Heart left ventricle (tissue), 16 donors: ENCODE measurements at regions of chr2 and their contacts with region 1.

Region 1: GRCh38 chr2:159712143-159712928 is at the start of gene MARCHF7:
- DNase-seq: peak; percentile 97 to 99 (median 97)
- ATAC-seq: peak; percentile 98 to 99 (median 98)
- H3K4me3 ChIP-seq: peak within 1 kb of the TSS; percentile 70 to 100 (median 86)
- H3K27ac ChIP-seq: peak within 1 kb of the TSS; percentile 91 to 100 (median 98)
- H3K4me1 ChIP-seq: peaks cover 8 to 54% (median 40%) of the 10 kb centered on the region in 12 donors
- H3K27me3 ChIP-seq: no peaks in the 10 kb centered on the region
- CTCF ChIP-seq: peak; percentile 28 to 78 (median 52)
- POLR2A ChIP-seq: peak in 1 of 2 donors; percentile 88
- total RNA-seq, gene MARCHF7: 69.8 to 97.9 (median 84.4) TPM

Region 2: DNA sequence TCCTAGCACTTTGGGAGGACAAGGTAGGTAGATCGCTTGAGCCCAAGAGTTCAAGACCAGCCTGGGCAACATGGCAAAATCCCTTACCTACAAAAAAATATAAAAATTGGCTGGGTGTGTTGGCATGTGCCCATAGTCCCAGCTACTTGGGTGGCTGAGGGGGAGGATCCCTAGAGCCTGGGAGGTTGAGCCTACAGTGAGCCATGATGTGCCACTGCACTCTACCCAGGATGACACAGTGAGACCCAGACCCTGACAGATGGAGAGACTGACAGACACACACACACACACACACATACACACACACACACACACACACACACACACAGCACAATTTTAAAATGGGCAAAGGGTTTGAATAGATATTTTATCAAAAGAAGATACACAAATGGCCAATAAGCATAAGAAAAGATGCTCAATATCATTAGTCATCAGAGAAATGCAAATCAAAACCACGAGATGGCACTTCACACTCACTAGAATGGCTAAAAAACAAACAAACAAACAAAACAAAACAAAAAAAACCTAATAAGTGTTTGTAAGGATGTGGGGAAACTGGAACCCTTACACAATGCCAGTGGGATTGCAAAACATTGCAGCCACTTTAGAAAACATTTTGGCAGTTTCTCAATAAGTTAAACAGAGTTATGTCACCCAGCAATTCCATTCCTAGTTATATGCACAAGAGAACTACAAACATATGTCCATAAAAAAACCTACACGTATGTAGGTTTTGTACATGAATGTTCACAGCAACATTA is 138.3 kb before region 1 on chr2:
- intact Hi-C with region 1: no loop called
- DNase-seq: no peak
- ATAC-seq: no peak
- H3K4me3 ChIP-seq: no peak overlapping the region
- H3K27ac ChIP-seq: no peak overlapping the region
- H3K4me1 ChIP-seq: peaks cover 0 to 17% (median 0%) of the 10 kb centered on the region in 12 donors
- H3K27me3 ChIP-seq: no peaks in the 10 kb centered on the region
- CTCF ChIP-seq: no peak
- POLR2A ChIP-seq: no peak

Region 3: GRCh38 chr2:159615140-159615951 is 97.0 kb before region 1 on chr2:
- intact Hi-C with region 1: loop called in 8 of 10 experiments (anchors 1 to 10 kb)
- DNase-seq: peak; percentile 93 to 94 (median 94)
- ATAC-seq: peak; percentile 89 to 98 (median 97)
- H3K4me3 ChIP-seq: peak overlapping the region; percentile 61 to 94 (median 74)
- H3K27ac ChIP-seq: peak overlapping the region; percentile 94 to 99 (median 98)
- H3K4me1 ChIP-seq: peaks cover 3 to 52% (median 32%) of the 10 kb centered on the region in 12 donors
- H3K27me3 ChIP-seq: no peaks in the 10 kb centered on the region
- CTCF ChIP-seq: no peak
- POLR2A ChIP-seq: peak in 1 of 2 donors; percentile 62

Region 4: GRCh38 chr2:159748089-159748488 is 35.8 kb after region 1 on chr2:
- intact Hi-C with region 1: loop called in 3 of 10 experiments (anchors 5 kb)
- DNase-seq: no peak
- ATAC-seq: no peak
- H3K4me3 ChIP-seq: no peak overlapping the region
- H3K27ac ChIP-seq: no peak overlapping the region
- H3K4me1 ChIP-seq: peaks cover 0 to 35% (median 11%) of the 10 kb centered on the region in 12 donors
- H3K27me3 ChIP-seq: no peaks in the 10 kb centered on the region
- CTCF ChIP-seq: no peak
- POLR2A ChIP-seq: no peak

Region 5: DNA sequence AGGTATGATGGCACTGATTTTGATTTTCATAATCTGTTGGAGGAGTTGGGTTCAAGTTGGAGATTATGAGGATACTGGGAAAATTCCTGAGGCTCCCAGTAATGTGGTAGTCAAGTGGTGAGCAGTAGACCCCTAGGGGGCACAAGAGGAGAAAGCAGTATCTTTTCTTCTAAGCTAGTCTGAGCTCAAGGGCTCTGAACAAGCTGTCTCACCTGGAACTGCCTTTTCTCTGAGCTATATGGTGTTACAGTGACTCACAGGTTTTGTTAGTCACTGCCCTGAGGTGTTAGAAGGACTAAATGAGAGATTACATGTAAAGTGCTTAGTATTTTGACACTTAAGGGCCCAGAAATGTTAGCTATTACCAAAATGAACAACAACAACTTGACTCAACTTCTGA is 43.5 kb after region 1 on chr2:
- intact Hi-C with region 1: loop called in 3 of 10 experiments (anchors 5 kb)
- DNase-seq: no peak
- ATAC-seq: peak in 3 of 4 donors; percentile 46 to 56 (median 51)
- H3K4me3 ChIP-seq: no peak overlapping the region
- H3K27ac ChIP-seq: peak overlapping the region in 2 of 12 donors; percentile 47 to 50
- H3K4me1 ChIP-seq: peaks cover 0 to 61% (median 29%) of the 10 kb centered on the region in 12 donors
- H3K27me3 ChIP-seq: no peaks in the 10 kb centered on the region
- CTCF ChIP-seq: peak in 3 of 12 donors; percentile 16 to 29 (median 20)
- POLR2A ChIP-seq: no peak

Region 6: GRCh38 chr2:159797543-159798375 is 85.4 kb after region 1 on chr2 and contains the start of gene CD302:
- intact Hi-C with region 1: loop called in 2 of 10 experiments (anchors 5 to 10 kb)
- DNase-seq: peak; percentile 82 to 90 (median 86)
- ATAC-seq: peak; percentile 49 to 92 (median 86)
- H3K4me3 ChIP-seq: peak within 1 kb of the TSS; percentile 62 to 96 (median 80)
- H3K27ac ChIP-seq: peak within 1 kb of the TSS; percentile 58 to 94 (median 77)
- H3K4me1 ChIP-seq: peaks cover 0 to 61% (median 13%) of the 10 kb centered on the region in 12 donors
- H3K27me3 ChIP-seq: no peaks in the 10 kb centered on the region
- CTCF ChIP-seq: no peak
- POLR2A ChIP-seq: peak in 1 of 2 donors; percentile 57
- total RNA-seq, gene CD302: 9.0 to 24.9 (median 13.7) TPM

Region 7: DNA sequence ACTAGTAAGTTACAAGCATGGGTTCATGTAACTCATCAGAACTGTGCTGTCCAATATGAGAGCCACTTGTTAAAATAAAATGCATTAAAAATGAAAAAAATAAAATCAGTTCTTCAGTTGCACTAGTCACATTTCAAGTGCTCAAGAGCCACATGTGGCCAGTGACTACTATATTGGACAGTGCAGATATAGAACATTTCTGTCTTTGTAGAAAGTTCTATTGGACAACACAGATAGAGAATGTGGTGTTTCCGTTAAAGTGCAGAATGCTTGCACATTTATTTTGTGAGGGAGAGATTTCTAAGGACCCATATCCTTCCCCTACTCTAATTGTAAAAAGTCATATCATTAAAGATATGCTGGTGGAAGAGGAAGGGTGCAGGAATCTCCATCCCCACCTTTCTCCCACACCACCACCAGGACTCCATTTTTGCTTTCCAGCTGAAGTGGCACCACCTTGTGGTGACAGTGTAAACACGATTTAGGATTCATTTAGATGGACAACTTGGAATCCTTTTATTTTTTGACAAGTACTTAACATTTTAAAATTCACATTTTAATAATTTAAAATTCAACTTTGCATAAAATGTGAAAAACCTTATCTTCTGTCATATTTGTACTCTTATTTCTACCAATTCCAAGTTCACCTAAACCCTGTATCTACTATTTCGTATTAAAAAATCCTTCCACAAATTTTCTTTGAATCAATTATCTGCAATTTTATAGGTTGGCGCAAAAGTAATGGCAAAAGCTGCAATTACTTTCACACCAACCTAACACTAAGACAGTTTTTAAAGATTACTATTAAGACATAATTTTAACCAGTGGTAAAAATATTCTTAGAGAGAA is 95.1 kb after region 1 on chr2:
- intact Hi-C with region 1: loop called in 1 of 10 experiments (anchors 10 kb)
- DNase-seq: peak in 2 of 5 donors; percentile 14 to 31
- ATAC-seq: peak in 3 of 4 donors; percentile 48 to 66 (median 61)
- H3K4me3 ChIP-seq: no peak overlapping the region
- H3K27ac ChIP-seq: no peak overlapping the region
- H3K4me1 ChIP-seq: peaks cover 0 to 5% (median 0%) of the 10 kb centered on the region in 12 donors
- H3K27me3 ChIP-seq: no peaks in the 10 kb centered on the region
- CTCF ChIP-seq: peak; percentile 65 to 83 (median 74)
- POLR2A ChIP-seq: no peak

Region 8: DNA sequence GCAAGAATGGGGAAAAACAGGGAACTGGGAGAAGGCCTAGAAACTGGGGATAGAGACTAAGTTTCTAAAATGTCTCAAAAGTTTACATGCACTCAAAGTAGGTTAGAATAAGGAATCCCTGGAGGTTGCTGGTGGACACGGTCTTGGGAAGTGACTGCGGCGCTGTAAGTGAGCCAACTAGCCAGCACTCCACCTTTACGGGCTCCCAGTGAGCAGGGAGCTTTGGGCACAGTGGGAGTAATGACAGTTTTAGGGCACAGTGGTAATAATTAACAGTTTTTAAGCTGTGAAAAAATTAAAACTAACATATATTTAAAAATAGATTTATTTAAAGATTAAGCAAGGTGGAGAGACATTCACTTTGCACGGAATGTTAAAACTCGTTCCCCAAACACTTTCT is 106.6 kb after region 1 on chr2:
- intact Hi-C with region 1: no loop called
- DNase-seq: no peak
- ATAC-seq: no peak
- H3K4me3 ChIP-seq: no peak overlapping the region
- H3K27ac ChIP-seq: no peak overlapping the region
- H3K4me1 ChIP-seq: peaks cover 0 to 5% (median 0%) of the 10 kb centered on the region in 12 donors
- H3K27me3 ChIP-seq: no peaks in the 10 kb centered on the region
- CTCF ChIP-seq: no peak
- POLR2A ChIP-seq: no peak

Region 9: GRCh38 chr2:159939946-159940345 is 227.6 kb after region 1 on chr2:
- intact Hi-C with region 1: loop called in 1 of 10 experiments (anchors 10 kb)
- DNase-seq: no peak
- ATAC-seq: no peak
- H3K4me3 ChIP-seq: no peak overlapping the region
- H3K27ac ChIP-seq: no peak overlapping the region
- H3K4me1 ChIP-seq: peaks cover 0 to 24% (median 6%) of the 10 kb centered on the region in 12 donors
- H3K27me3 ChIP-seq: no peaks in the 10 kb centered on the region
- CTCF ChIP-seq: peak in 9 of 12 donors; percentile 5 to 48 (median 29)
- POLR2A ChIP-seq: no peak